ENCODE measurements at regions of chr3 and their contacts with region 1.

Region 1: DNA sequence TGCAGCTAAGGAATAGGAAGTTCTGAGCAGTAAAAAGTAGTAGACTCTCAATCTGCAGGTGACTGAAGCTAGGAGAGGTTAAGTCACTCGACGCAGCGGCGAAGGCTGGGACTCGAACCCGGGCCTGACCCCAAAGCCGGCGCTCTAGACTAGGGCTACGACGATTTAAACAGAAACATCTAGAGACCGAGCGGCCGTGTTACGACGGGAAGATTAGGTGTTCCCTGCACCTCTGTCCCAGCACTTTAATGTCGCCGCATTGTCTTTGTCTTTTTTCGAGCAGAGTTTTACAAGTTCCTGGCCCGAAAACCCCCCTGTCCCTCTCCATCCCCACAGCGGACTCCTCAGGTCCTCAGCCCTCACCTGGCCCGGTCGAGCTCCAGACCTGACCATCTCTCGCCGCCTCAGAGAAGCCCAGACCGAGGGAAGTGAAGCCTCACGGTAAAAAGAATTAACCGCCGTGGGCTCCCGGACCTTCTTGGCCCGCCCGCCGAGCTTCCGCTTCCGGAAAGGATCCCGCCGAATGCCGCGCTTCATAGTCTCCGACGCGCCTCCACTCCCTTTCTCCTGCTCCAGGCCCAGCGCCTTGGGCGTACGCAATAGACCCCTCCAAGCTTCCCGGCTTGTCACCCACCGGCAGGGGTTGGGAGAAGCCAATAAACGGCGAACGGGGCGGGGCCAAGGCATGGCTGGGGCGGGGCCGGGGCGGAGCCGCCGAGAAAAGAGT is at the start of gene CCDC14:
- DNase-seq: peak; percentile 98
- ATAC-seq: peak; percentile 98
- H3K4me3 ChIP-seq: peak within 1 kb of the TSS; percentile 84
- H3K27ac ChIP-seq: peak within 1 kb of the TSS; percentile 64
- H3K4me1 ChIP-seq: peaks cover 23% of the 10 kb centered on the region
- H3K27me3 ChIP-seq: no peaks in the 10 kb centered on the region
- CTCF ChIP-seq: no peak
- total RNA-seq, gene CCDC14: 40.9 and 62.6 TPM in 2 replicates

Region 2: DNA sequence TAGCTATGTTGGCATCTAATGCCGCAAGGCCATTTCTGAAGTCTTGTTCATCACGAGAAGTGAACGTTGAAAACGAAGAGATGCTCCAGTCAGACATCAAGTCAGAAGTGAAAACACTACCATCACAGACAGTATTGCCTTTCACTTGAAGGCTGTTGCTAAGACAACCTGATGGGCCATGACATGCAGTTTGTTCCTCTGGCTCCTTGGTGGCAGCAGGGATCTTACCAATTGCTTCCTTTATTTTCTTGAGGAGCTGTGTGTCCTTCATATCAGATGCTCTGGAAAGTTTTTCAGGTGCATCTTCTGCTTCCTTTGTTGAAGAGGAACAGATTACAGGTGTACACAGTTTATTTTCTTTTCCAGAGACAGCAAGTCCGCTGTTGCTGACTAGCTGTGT is 46.1 kb before region 1 on chr3:
- CTCF ChIA-PET with region 1: no interaction called
- POLR2A ChIA-PET with region 1: no interaction called
- intact Hi-C with region 1: no loop called
- DNase-seq: no peak
- ATAC-seq: no peak
- H3K4me3 ChIP-seq: no peak overlapping the region
- H3K27ac ChIP-seq: no peak overlapping the region
- H3K4me1 ChIP-seq: no peaks in the 10 kb centered on the region
- H3K27me3 ChIP-seq: no peaks in the 10 kb centered on the region
- CTCF ChIP-seq: no peak

Region 3: GRCh38 chr3:124032648-124033359 is 71.9 kb after region 1 on chr3:
- CTCF ChIA-PET with region 1: interaction called, 5 read pairs
- POLR2A ChIA-PET with region 1: no interaction called
- intact Hi-C with region 1: loop called (anchors 2 kb)
- DNase-seq: peak; percentile 85
- ATAC-seq: peak; percentile 92
- H3K4me3 ChIP-seq: peak overlapping the region; percentile 75
- H3K27ac ChIP-seq: no peak overlapping the region
- H3K4me1 ChIP-seq: peaks cover 3% of the 10 kb centered on the region; the same call in 1 of the 2 replicates
- H3K27me3 ChIP-seq: peaks cover 54% of the 10 kb centered on the region
- CTCF ChIP-seq: peak; percentile 71

Measured in PC-3 (cell line).